ENCODE measurements at regions of chrX and their contacts with region 1.

Region 1: DNA sequence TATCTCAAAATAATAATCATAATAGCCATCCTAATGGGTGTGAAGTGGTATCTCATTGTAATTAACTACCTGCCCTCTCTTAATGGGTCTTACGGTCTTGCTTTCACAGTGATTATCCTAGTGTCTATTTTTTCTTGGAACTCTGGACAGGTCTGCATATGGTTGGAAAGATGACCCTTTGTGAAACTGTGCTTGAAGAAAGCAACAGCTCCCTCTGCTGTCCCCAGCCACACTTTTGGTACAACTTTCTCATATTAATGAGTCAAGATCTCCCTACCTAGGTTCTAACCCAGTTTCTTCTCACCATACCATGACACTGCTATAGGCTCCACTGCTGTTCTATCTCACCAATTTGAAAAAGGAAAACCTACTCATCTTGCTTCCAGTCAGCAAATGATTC is 2.4 kb downstream of the TFDP3 start:
- DNase-seq: peak; percentile 52
- H3K4me3 ChIP-seq: no peak overlapping the region
- H3K27ac ChIP-seq: no peak overlapping the region
- H3K4me1 ChIP-seq: peaks cover 5% of the 10 kb centered on the region
- H3K27me3 ChIP-seq: no peaks in the 10 kb centered on the region
- CTCF ChIP-seq: peak; percentile 69

Region 2: GRCh38 chrX:133005066-133005465 is 210.7 kb before region 1 on chrX:
- CTCF ChIA-PET with region 1: interaction called, 4 read pairs
- POLR2A ChIA-PET with region 1: no interaction called
- intact Hi-C with region 1: loop called (anchors 5 kb)
- DNase-seq: peak; percentile 41
- H3K4me3 ChIP-seq: no peak overlapping the region
- H3K27ac ChIP-seq: no peak overlapping the region
- H3K4me1 ChIP-seq: no peaks in the 10 kb centered on the region
- H3K27me3 ChIP-seq: no peaks in the 10 kb centered on the region
- CTCF ChIP-seq: peak; percentile 81

Region 3: GRCh38 chrX:133045986-133046385 is 169.8 kb before region 1 on chrX:
- CTCF ChIA-PET with region 1: no interaction called
- POLR2A ChIA-PET with region 1: no interaction called
- intact Hi-C with region 1: loop called (anchors 10 kb)
- DNase-seq: peak; percentile 35
- H3K4me3 ChIP-seq: no peak overlapping the region
- H3K27ac ChIP-seq: no peak overlapping the region
- H3K4me1 ChIP-seq: no peaks in the 10 kb centered on the region
- H3K27me3 ChIP-seq: peaks cover 4% of the 10 kb centered on the region
- CTCF ChIP-seq: peak; percentile 51